ENCODE measurements at regions of chr11 and their contacts with region 1.

Region 1: DNA sequence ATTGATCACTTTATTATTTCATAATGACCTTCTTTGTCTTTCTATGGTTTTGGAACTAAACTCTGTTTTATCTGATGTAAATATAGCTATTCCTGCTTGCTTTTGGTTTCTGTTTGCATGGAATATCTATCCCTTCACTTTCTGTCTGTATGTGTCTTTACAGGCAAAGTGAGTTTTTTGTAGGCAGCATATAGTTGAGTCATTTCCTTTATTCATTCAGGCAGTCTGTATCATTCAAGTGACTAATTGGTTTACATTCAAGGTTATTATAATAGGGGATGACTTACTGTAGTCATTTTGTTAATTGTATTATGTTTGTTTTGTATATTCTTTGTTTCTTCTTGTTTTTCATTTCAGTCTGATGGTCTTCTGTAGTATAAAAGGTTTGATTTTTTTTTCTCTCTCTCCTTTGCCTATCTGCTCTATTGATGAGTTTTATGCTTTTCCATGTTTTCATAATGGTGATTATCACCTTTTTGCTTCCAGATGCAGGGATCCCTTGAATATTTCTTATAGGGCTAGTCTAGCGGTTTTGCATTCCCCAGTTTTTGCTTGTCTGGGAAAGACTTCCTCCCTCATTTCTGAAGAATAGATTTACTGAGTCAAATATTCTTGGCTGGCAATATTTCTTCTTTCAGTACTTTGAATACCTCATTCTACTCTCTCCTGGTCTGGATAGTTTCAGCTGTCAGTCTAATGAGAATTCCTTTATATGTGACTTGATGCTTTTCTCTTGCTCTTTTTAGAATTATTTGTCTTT is 50.4 kb downstream of the GDPD4 start:
- DNase-seq: no peak
- ATAC-seq: peak; percentile 99
- H3K4me3 Mint-ChIP-seq: no peak overlapping the region
- H3K27ac Mint-ChIP-seq: no peak overlapping the region
- H3K4me1 Mint-ChIP-seq: peaks cover 22% of the 10 kb centered on the region
- H3K27me3 Mint-ChIP-seq: no peaks in the 10 kb centered on the region

Region 2: GRCh38 chr11:77309401-77310085 is 58.5 kb after region 1 on chr11:
- CTCF ChIA-PET with region 1: no interaction called
- POLR2A ChIA-PET with region 1: no interaction called
- intact Hi-C with region 1: loop called in 1 of 2 experiments (anchors 2 kb)
- DNase-seq: no peak
- ATAC-seq: no peak
- H3K4me3 Mint-ChIP-seq: no peak overlapping the region
- H3K27ac Mint-ChIP-seq: no peak overlapping the region
- H3K4me1 Mint-ChIP-seq: peaks cover 6% of the 10 kb centered on the region
- H3K27me3 Mint-ChIP-seq: no peaks in the 10 kb centered on the region

Measured in activated CD4-positive, alpha-beta T cell treated with anti-CD3 and anti-CD28 coated beads for 36 hours (primary cell).